IMR-90 (cell line): ENCODE measurements at regions of chr4 and their contacts with region 1.

Region 1: GRCh38 chr4:180828440-180829018 is 1414.7 kb upstream of the TENM3 start:
- DNase-seq: peak; percentile 83
- ATAC-seq: peak; percentile 71
- H3K4me3 ChIP-seq: no peak overlapping the region
- H3K27ac ChIP-seq: no peak overlapping the region
- H3K4me1 ChIP-seq: 0 out of 2 replicates have a peak, but pooled peaks cover 2% of the 10 kb centered on the region
- H3K27me3 ChIP-seq: no peaks in the 10 kb centered on the region
- CTCF ChIP-seq: peak; percentile 86
- POLR2A ChIP-seq: no peak
- RAD21 ChIP-seq: peak; percentile 84

Region 2: DNA sequence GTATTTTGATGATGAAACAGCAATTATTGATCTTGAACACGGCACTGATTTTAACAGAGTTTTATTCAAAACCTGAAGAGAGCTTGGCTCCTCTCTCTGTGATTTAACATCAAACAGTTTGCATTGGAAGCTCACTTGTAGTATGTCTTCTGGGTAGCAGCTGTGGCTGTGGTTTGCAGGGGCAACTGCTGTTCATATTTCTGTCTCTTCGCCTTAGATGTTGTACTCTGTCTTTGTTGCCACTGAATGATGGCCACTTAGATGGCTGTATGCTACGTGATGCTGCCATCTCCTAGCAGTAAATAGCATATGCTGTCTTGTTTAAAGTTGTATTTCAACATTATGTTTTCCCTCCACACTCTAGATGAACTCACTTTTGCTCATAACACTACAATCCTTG is 328.4 kb before region 1 on chr4:
- CTCF ChIA-PET with region 1: no interaction called
- POLR2A ChIA-PET with region 1: no interaction called
- dilution Hi-C with region 1: no loop called
- in situ Hi-C with region 1: no loop called
- intact Hi-C with region 1: no loop called
- DNase-seq: no peak
- ATAC-seq: no peak
- H3K4me3 ChIP-seq: no peak overlapping the region
- H3K27ac ChIP-seq: no peak overlapping the region
- H3K4me1 ChIP-seq: no peaks in the 10 kb centered on the region
- H3K27me3 ChIP-seq: no peaks in the 10 kb centered on the region
- CTCF ChIP-seq: no peak
- POLR2A ChIP-seq: no peak
- RAD21 ChIP-seq: no peak

Region 3: GRCh38 chr4:180947425-180947824 is 118.9 kb after region 1 on chr4:
- CTCF ChIA-PET with region 1: no interaction called
- POLR2A ChIA-PET with region 1: no interaction called
- dilution Hi-C with region 1: no loop called
- in situ Hi-C with region 1: loop called (anchors 10 kb)
- intact Hi-C with region 1: loop called (anchors 1 kb)
- DNase-seq: peak; percentile 44
- ATAC-seq: peak; percentile 46
- H3K4me3 ChIP-seq: no peak overlapping the region
- H3K27ac ChIP-seq: no peak overlapping the region
- H3K4me1 ChIP-seq: no peaks in the 10 kb centered on the region
- H3K27me3 ChIP-seq: no peaks in the 10 kb centered on the region
- CTCF ChIP-seq: peak; percentile 52
- POLR2A ChIP-seq: no peak
- RAD21 ChIP-seq: peak; percentile 61

Region 4: DNA sequence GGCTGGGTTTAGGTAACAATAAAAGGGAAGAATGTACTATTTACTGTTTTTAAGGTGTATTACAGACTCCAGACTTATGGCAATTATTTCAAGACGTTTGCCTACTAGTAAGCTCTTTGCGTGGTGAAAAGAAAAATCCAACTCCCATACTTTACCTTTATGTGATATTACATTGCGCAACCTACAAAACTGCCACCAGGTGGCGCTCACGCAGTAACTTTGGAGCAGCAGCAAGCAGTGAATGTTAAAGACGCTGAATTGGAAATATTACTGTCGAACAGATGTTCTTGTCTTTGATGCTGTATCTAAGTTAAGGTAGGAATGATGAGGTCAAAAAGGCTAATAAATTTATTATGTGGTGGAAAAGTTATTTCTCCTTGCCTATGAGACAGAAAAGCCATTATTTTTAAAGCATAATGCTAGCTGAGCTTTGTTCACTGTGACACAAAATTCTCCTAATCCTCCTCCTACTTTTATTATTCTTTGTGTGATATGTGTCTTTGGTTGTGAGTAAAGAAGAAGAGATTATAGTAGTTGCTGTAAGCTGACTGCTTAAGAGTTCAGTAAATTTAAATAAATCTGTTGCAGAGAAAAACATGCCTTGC is 314.8 kb after region 1 on chr4:
- CTCF ChIA-PET with region 1: no interaction called
- POLR2A ChIA-PET with region 1: no interaction called
- dilution Hi-C with region 1: no loop called
- in situ Hi-C with region 1: no loop called
- intact Hi-C with region 1: loop called (anchors 5 kb)
- DNase-seq: peak; percentile 72
- ATAC-seq: peak; percentile 77
- H3K4me3 ChIP-seq: no peak overlapping the region
- H3K27ac ChIP-seq: no peak overlapping the region
- H3K4me1 ChIP-seq: no peaks in the 10 kb centered on the region
- H3K27me3 ChIP-seq: no peaks in the 10 kb centered on the region
- CTCF ChIP-seq: peak; percentile 91
- POLR2A ChIP-seq: no peak
- RAD21 ChIP-seq: peak; percentile 90

Region 5: GRCh38 chr4:181503687-181504390 is 675.3 kb after region 1 on chr4:
- CTCF ChIA-PET with region 1: no interaction called
- POLR2A ChIA-PET with region 1: no interaction called
- dilution Hi-C with region 1: no loop called
- in situ Hi-C with region 1: loop called (anchors 25 kb)
- intact Hi-C with region 1: no loop called
- DNase-seq: no peak
- ATAC-seq: no peak
- H3K4me3 ChIP-seq: no peak overlapping the region
- H3K27ac ChIP-seq: no peak overlapping the region
- H3K4me1 ChIP-seq: no peaks in the 10 kb centered on the region
- H3K27me3 ChIP-seq: peaks cover 9% of the 10 kb centered on the region
- CTCF ChIP-seq: no peak
- POLR2A ChIP-seq: no peak
- RAD21 ChIP-seq: no peak